T-cell (primary cell): ENCODE measurements at regions of chr9 and their contacts with region 1.

Region 1: GRCh38 chr9:37827473-37828165 is 27.0 kb downstream of the DCAF10 start:
- DNase-seq: no peak
- ATAC-seq: no peak
- H3K4me3 ChIP-seq: no peak overlapping the region
- H3K4me3 Mint-ChIP-seq: no peak overlapping the region
- H3K27ac ChIP-seq: no peak overlapping the region
- H3K27ac Mint-ChIP-seq: no peak overlapping the region
- H3K4me1 ChIP-seq: no peaks in the 10 kb centered on the region
- H3K4me1 Mint-ChIP-seq: peaks cover 0 to 2% (median 0%) of the 10 kb centered on the region in 3 donors
- H3K27me3 ChIP-seq: no peaks in the 10 kb centered on the region
- H3K27me3 Mint-ChIP-seq: no peaks in the 10 kb centered on the region

Region 2: GRCh38 chr9:38374847-38375571 is 547.4 kb after region 1 on chr9:
- CTCF ChIA-PET with region 1: no interaction called
- POLR2A ChIA-PET with region 1: interaction called in 1 of 2 experiments, 18 read pairs
- DNase-seq: no peak
- ATAC-seq: no peak
- H3K4me3 ChIP-seq: no peak overlapping the region
- H3K4me3 Mint-ChIP-seq: no peak overlapping the region
- H3K27ac ChIP-seq: no peak overlapping the region
- H3K27ac Mint-ChIP-seq: no peak overlapping the region
- H3K4me1 ChIP-seq: no peaks in the 10 kb centered on the region
- H3K4me1 Mint-ChIP-seq: no peaks in the 10 kb centered on the region
- H3K27me3 ChIP-seq: peaks cover 0 to 11% of the 10 kb centered on the region in 2 experiments
- H3K27me3 Mint-ChIP-seq: peaks cover 7 to 10% of the 10 kb centered on the region in 2 donors